ENCODE measurements at regions of chr3 and their contacts with region 1.

Region 1: GRCh38 chr3:172039436-172040077 is at the start of gene FNDC3B:
- DNase-seq: peak; percentile 96
- H3K4me3 Mint-ChIP-seq: peak within 1 kb of the TSS; percentile 88
- H3K27ac Mint-ChIP-seq: peak within 1 kb of the TSS; percentile 89
- H3K4me1 Mint-ChIP-seq: peaks cover 29% of the 10 kb centered on the region
- H3K27me3 Mint-ChIP-seq: no peaks in the 10 kb centered on the region
- total RNA-seq, gene FNDC3B: 14.4 to 17.8 TPM

Region 2: DNA sequence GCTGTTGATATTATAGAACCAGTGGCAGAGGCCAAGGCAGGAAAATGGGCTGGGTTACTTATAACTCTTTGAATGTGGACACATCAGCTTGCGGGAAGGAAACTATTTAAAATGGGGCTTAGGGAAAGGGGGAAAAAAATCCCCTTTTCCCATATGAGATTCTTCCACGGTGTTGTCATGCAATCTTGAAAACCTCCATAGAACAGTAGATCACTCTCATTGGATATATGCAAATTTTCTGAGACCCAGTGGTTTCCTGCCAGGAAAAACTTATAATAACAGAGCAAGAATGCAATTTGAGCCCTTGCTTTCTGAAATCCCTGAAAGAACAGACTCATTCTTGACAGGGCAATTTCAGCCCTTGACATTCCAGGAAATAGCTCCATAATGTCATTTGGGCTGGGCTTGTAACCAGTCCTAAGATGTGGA is 165.3 kb before region 1 on chr3:
- CTCF ChIA-PET with region 1: no interaction called
- POLR2A ChIA-PET with region 1: no interaction called
- intact Hi-C with region 1: no loop called
- DNase-seq: no peak
- H3K4me3 Mint-ChIP-seq: no peak overlapping the region
- H3K27ac Mint-ChIP-seq: no peak overlapping the region
- H3K4me1 Mint-ChIP-seq: peaks cover 9% of the 10 kb centered on the region
- H3K27me3 Mint-ChIP-seq: peaks cover 13% of the 10 kb centered on the region

Region 3: DNA sequence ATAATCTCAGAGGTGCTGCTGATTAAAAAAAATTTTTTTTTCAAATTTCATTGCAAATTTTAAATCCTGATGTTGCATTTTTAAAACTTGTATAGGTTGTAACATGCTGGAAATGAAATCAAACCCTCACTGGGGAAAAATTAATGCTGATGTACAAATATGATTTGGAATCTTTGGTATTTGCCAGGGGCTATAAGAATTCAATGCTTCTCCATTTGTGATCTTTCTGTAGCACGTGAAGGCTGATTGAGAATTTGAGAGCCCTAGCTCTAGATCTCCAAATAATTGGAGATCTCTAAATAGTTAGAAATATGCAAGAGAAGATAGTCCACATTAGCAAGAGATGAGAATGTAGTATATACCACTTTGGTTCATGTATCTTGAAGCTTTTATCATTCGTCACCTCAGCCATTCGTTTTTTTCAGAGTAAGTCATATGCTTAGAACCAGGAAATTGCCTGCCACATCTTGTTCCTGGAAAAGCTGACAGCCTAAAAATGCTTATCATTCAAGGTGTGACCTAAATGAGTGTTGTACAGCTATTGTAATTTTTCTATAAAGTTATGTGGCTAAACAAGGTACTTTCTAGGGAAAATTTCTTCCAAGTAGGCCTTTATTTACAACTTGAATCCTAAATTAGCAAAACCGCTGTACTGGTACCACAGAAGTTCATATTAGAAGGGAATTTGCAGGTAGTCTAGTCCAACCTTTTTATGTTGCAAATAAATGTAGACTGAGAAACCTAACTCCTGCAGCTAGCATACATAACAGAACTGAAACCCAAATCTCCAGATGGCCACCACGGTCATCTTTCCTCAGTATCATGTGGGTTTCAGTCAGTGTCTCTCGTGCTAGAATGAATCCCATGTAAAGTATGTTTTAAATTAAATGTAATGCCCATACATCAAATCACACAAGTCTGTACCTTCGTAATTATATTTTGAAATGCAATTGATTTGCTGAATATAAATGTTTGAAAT is 48.3 kb after region 1 on chr3:
- CTCF ChIA-PET with region 1: interaction called, 5 read pairs
- POLR2A ChIA-PET with region 1: interaction called, 4 read pairs
- intact Hi-C with region 1: loop called (anchors 5 kb)
- DNase-seq: peak; percentile 35
- H3K4me3 Mint-ChIP-seq: no peak overlapping the region
- H3K27ac Mint-ChIP-seq: peak overlapping the region; percentile 55
- H3K4me1 Mint-ChIP-seq: peaks cover 47% of the 10 kb centered on the region
- H3K27me3 Mint-ChIP-seq: no peaks in the 10 kb centered on the region

Region 4: GRCh38 chr3:172138795-172139441 is 99.4 kb after region 1 on chr3:
- CTCF ChIA-PET with region 1: interaction called, 9 read pairs
- POLR2A ChIA-PET with region 1: no interaction called
- intact Hi-C with region 1: loop called (anchors 2 kb)
- DNase-seq: peak; percentile 66
- H3K4me3 Mint-ChIP-seq: peak overlapping the region; percentile 33
- H3K27ac Mint-ChIP-seq: peak overlapping the region; percentile 71
- H3K4me1 Mint-ChIP-seq: peaks cover 56% of the 10 kb centered on the region
- H3K27me3 Mint-ChIP-seq: no peaks in the 10 kb centered on the region

Region 5: DNA sequence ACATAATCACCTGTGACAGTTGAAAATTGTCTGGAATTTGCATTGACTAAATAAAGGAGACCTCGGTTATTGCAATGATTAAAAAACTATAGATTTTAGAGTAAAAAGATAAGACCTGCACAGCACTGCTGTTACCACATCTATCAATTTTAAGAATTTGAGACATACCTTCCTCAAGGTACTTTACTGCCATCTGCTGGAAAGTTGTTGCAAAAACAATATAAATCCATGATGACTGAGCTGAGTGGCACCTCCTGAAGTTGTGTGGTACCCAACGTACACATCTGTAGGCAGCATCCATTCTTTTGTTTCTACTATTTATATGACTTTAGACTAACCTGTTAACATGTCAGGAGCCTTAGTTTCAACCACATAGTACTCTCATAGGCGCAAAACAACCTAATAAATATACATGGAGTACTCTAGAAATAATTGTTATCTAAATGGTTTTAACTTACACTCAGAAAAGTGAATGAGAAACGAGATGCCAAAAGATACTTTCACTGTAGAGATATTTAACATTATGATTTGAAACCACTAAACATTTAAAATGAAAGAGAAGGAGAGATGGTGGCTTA is 302.0 kb after region 1 on chr3:
- CTCF ChIA-PET with region 1: interaction called, 27 read pairs
- POLR2A ChIA-PET with region 1: no interaction called
- intact Hi-C with region 1: loop called (anchors 1 kb)
- DNase-seq: no peak
- H3K4me3 Mint-ChIP-seq: no peak overlapping the region
- H3K27ac Mint-ChIP-seq: no peak overlapping the region
- H3K4me1 Mint-ChIP-seq: no peaks in the 10 kb centered on the region
- H3K27me3 Mint-ChIP-seq: no peaks in the 10 kb centered on the region

Region 6: GRCh38 chr3:172666873-172667694 is 627.5 kb after region 1 on chr3:
- CTCF ChIA-PET with region 1: no interaction called
- POLR2A ChIA-PET with region 1: no interaction called
- intact Hi-C with region 1: loop called (anchors 2 kb)
- DNase-seq: peak; percentile 82
- H3K4me3 Mint-ChIP-seq: no peak overlapping the region
- H3K27ac Mint-ChIP-seq: no peak overlapping the region
- H3K4me1 Mint-ChIP-seq: peaks cover 14% of the 10 kb centered on the region
- H3K27me3 Mint-ChIP-seq: no peaks in the 10 kb centered on the region